Activated T-helper 1 cell treated with anti-CD3 and anti-CD28 coated beads, Interleukin-12 subunit alpha, Interleukin-12 subunit beta, Interleukin-2, Interleukin-4 antibody, amounts not matched to agents 30 ng/mL and 10 ng/mL and 1 ng/mL, durations not matched to agents 14 hours and 24 hours and 36 hours (primary cell): ENCODE measurements at regions of chr1 and their contacts with region 1.

Region 1: DNA sequence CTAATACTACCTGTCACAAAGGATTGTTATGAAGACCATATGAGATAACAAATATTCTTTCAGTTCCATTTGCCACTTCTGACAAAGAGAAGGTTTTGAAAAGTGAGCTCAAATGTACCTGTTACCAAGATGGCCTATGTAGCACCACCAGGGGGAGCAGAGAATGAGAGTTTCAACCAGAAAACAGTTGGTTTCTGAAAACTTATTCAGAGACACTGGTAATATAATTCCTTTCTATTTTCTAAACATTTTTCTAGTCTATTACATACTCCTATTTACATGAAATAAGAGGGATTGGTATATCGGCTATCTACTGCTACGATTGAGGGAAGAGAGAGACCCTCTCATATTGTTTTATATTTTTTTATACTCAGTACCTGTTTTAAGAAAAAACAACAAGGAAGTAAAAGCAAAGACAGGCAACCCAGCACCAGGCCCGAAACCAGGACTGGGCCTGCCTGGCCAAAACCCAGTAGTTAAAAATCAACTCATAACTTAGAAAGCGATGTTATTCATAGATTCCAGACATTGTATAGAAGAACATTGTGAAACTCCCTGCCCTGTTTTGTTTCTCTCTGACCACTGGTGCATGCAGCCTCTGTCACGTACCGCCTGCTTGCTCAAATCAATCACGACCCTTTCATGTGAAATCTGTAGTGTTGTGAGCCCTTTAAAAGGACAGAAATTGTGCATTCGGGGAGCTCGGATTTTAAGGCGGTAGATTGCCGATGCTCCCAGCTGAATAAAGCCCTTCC is 48.3 kb downstream of the IL23R start:
- DNase-seq: peak; percentile 42
- H3K4me3 Mint-ChIP-seq: peak overlapping the region; percentile 43
- H3K27ac Mint-ChIP-seq: peak overlapping the region; percentile 61
- H3K4me1 Mint-ChIP-seq: peaks cover 65% of the 10 kb centered on the region
- H3K27me3 Mint-ChIP-seq: no peaks in the 10 kb centered on the region

Region 2: DNA sequence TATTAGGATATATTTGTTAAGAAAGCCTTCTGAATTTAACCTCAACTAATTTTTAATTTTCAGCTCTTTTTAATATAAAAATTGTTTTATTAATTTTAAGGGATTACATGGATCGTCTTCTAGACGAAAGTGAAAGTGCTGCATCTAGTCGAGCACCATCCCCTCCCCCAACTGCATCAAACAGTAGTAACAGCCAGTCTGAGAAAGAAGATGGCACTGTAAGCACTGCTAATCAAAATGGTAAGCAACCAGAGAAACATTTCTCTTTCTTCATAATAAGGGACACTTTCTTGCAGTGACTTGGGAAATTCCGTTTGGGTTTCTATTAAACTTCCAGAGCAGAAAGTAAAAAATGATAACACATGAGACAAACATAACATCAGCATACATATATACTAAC is 232.9 kb before region 1 on chr1:
- intact Hi-C with region 1: loop called (anchors 5 kb)
- DNase-seq: peak; percentile 40
- H3K4me3 Mint-ChIP-seq: peak overlapping the region; percentile 69
- H3K27ac Mint-ChIP-seq: peak overlapping the region; percentile 75
- H3K4me1 Mint-ChIP-seq: peaks cover 35% of the 10 kb centered on the region
- H3K27me3 Mint-ChIP-seq: no peaks in the 10 kb centered on the region

Region 3: GRCh38 chr1:67134695-67135094 is 79.9 kb before region 1 on chr1 and contains the start of gene C1orf141:
- intact Hi-C with region 1: no loop called
- DNase-seq: no peak
- H3K4me3 Mint-ChIP-seq: peak within 1 kb of the TSS; percentile 80
- H3K27ac Mint-ChIP-seq: peak within 1 kb of the TSS; percentile 46
- H3K4me1 Mint-ChIP-seq: peaks cover 22% of the 10 kb centered on the region
- H3K27me3 Mint-ChIP-seq: no peaks in the 10 kb centered on the region
- total RNA-seq, gene C1orf141: not detected in 2 replicates

Region 4: DNA sequence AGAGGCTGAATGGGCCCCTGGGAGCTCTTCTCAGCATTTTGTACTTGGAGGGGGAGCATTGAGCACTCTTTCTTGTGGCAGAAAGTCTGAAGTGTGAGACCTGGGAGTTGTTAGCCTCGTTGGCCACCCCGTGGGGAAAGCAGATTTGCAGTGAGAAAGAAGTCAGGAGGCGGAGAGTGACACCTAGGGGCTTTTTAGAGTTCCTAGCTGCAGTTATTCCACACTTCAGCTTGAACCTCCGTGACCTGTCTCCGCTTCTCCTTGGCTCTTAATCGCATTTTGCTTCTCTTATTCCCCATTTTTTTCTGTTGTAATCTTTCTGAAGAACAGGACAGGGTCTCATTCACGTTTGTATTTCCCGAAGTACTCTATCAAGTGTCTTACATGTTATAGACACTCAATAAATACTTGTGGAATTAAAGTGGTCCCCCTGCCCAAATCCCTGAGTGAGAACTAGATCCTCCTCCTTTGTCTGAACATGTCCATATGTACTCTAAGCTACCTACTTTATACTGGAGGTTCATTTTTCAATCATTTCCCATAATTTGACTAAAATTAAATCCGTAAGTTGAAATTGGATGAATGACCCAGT is 65.3 kb before region 1 on chr1:
- intact Hi-C with region 1: loop called (anchors 1 kb)
- DNase-seq: peak; percentile 42
- H3K4me3 Mint-ChIP-seq: no peak overlapping the region
- H3K27ac Mint-ChIP-seq: peak overlapping the region; percentile 40
- H3K4me1 Mint-ChIP-seq: peaks cover 56% of the 10 kb centered on the region
- H3K27me3 Mint-ChIP-seq: no peaks in the 10 kb centered on the region

Region 5: GRCh38 chr1:67194209-67194863 is 20.3 kb before region 1 on chr1:
- intact Hi-C with region 1: loop called (anchors 1 kb)
- DNase-seq: no peak
- H3K4me3 Mint-ChIP-seq: no peak overlapping the region
- H3K27ac Mint-ChIP-seq: no peak overlapping the region
- H3K4me1 Mint-ChIP-seq: peaks cover 38% of the 10 kb centered on the region
- H3K27me3 Mint-ChIP-seq: no peaks in the 10 kb centered on the region

Region 6: GRCh38 chr1:67280696-67281095 is 66.1 kb after region 1 on chr1:
- intact Hi-C with region 1: no loop called
- DNase-seq: no peak
- H3K4me3 Mint-ChIP-seq: no peak overlapping the region
- H3K27ac Mint-ChIP-seq: no peak overlapping the region
- H3K4me1 Mint-ChIP-seq: peaks cover 35% of the 10 kb centered on the region
- H3K27me3 Mint-ChIP-seq: no peaks in the 10 kb centered on the region

Region 7: DNA sequence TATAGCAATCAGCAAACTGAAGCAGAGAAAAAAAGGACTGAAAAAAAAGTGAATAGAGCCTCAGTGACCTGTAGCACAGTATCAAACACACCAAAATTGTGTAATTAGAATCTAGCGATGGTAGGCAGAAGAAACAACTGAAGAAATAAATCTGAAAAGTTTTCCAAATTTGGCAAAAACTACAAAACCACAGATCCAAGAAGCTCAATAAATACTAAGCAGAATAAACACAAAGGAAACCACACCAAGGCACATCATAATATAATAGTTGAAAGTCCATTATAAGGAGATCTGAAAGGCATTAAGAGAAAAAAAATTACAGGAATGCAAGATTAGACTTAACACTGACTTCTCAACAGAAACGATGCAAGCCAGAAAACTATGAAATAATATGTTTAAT is 86.0 kb after region 1 on chr1:
- intact Hi-C with region 1: loop called (anchors 1 kb)
- DNase-seq: no peak
- H3K4me3 Mint-ChIP-seq: peak overlapping the region; percentile 35
- H3K27ac Mint-ChIP-seq: peak overlapping the region; percentile 63
- H3K4me1 Mint-ChIP-seq: peaks cover 88% of the 10 kb centered on the region
- H3K27me3 Mint-ChIP-seq: no peaks in the 10 kb centered on the region

Region 8: DNA sequence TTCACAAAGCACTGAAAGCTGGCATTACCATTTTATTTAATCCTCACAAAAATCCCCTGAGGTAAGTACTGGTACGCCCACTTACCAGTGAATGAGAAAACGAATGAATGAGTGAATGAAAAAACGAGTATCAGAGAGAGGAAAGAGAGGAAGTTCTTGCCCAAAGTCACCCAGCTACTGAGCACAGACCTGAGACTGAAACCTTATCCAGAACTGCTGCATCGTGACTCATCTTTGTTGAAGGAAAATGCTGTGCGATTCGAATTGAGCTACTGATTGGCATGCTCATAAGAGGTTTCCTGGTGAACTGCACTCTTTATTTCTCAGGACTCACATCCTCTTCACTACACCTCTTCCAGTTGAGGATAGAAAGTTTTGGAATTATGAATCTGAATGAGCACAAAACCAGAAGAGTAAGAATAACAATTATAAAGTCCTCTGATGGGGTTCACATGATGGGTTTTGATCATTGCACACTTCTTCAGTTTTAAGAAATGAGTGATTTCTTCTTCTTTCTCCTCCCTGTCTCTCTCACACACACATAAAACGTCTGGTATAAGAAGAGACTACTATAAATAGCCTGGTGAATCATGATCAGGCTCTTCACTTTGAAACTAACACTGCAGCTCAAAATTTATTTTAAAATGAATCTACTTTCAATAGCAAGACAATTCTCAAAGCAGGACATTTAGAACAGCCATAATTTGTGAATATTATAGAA is 125.2 kb after region 1 on chr1:
- intact Hi-C with region 1: loop called (anchors 2 kb)
- DNase-seq: peak; percentile 47
- H3K4me3 Mint-ChIP-seq: peak overlapping the region; percentile 66
- H3K27ac Mint-ChIP-seq: peak overlapping the region; percentile 90
- H3K4me1 Mint-ChIP-seq: peaks cover 80% of the 10 kb centered on the region
- H3K27me3 Mint-ChIP-seq: no peaks in the 10 kb centered on the region